SK-N-SH (cell line): ENCODE measurements at regions of chr12 and their contacts with region 1.

Region 1: GRCh38 chr12:6470375-6471163 is at the start of gene VAMP1:
- DNase-seq: peak; percentile 97
- H3K4me3 ChIP-seq: peak within 1 kb of the TSS; percentile 77 to 92
- H3K27ac ChIP-seq: peak within 1 kb of the TSS; percentile 91 to 98
- H3K4me1 ChIP-seq: peaks cover 0 to 13% of the 10 kb centered on the region in 2 experiments; a peak in 2 of 4 replicates
- H3K27me3 ChIP-seq: no peaks in the 10 kb centered on the region
- CTCF ChIP-seq: no peak
- EP300 ChIP-seq: no peak; a peak in 1 of 4 replicates
- RAD21 ChIP-seq: no peak
- polyA plus RNA-seq, gene VAMP1: 36.8 and 48.9 TPM in 2 replicates

Region 2: DNA sequence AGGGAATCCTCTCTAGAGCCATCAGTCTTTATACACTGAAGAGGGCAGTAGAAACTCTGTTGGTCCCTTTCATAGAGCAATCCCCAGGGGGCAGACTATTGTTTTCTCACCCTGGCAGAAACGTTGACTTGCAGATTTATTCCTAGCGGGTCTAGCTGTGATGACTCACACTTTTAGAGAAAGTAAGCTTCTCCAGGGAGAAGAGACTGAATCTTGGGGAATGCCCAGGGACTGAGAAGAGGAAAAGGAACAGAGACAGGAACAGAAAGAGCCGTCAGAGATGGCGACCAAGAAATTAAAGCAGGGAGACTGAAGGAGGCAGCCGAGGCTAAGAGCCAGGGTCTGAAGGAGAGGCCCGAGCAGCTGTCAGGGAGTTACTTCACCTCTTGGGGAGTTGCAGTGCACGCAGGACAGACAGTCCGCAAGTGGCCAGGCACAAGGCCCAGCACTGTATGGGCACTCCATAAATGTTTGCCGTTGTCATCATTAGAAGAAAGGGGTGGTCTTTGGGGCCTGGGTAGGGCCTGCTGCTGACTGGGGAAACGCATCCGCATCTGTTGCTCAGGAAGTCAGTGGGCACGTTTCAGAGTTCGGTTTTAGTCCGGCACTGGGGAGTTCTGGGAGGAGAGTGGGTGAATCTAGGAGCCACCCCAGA is 147.1 kb before region 1 on chr12:
- CTCF ChIA-PET with region 1: interaction called, 20 read pairs
- POLR2A ChIA-PET with region 1: no interaction called
- DNase-seq: peak; percentile 63
- H3K4me3 ChIP-seq: no peak overlapping the region
- H3K27ac ChIP-seq: peak overlapping the region; percentile 70 to 87
- H3K4me1 ChIP-seq: peaks cover 9 to 23% of the 10 kb centered on the region in 2 experiments; a peak in 3 of 4 replicates
- H3K27me3 ChIP-seq: no peaks in the 10 kb centered on the region
- CTCF ChIP-seq: peak; percentile 77
- EP300 ChIP-seq: peak in 1 of 2 experiments; percentile 46; a peak in 1 of 4 replicates
- RAD21 ChIP-seq: peak; percentile 32

Region 3: GRCh38 chr12:6399884-6400644 is 70.5 kb before region 1 on chr12:
- CTCF ChIA-PET with region 1: no interaction called
- POLR2A ChIA-PET with region 1: no interaction called
- DNase-seq: no peak
- H3K4me3 ChIP-seq: no peak overlapping the region
- H3K27ac ChIP-seq: no peak overlapping the region
- H3K4me1 ChIP-seq: no peaks in the 10 kb centered on the region
- H3K27me3 ChIP-seq: no peaks in the 10 kb centered on the region
- CTCF ChIP-seq: no peak
- EP300 ChIP-seq: no peak
- RAD21 ChIP-seq: no peak

Region 4: DNA sequence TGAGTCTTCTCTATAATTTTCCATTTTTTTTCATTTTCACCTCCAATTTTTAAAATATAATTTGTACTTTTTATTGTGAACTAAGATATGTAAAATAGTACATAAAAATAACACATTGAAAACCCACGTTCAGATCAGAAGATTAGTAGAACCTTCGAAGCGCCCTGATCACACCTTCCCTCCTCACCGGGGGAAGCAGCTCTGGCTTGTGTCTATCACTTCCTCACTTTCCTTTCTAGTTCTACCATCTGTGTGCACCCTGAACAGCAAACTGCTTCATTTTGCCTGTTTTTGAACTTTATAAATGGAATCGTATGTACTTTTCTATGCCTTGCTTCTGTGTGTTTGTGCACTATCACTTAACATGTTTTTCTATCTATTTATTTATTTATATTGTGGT is 37.6 kb before region 1 on chr12:
- CTCF ChIA-PET with region 1: interaction called, 91 read pairs
- POLR2A ChIA-PET with region 1: interaction called, 4 read pairs
- DNase-seq: no peak
- H3K4me3 ChIP-seq: no peak overlapping the region
- H3K27ac ChIP-seq: no peak overlapping the region
- H3K4me1 ChIP-seq: peaks cover 3 to 6% of the 10 kb centered on the region in 2 experiments; a peak in 2 of 4 replicates
- H3K27me3 ChIP-seq: no peaks in the 10 kb centered on the region
- CTCF ChIP-seq: no peak
- EP300 ChIP-seq: no peak
- RAD21 ChIP-seq: no peak

Region 5: GRCh38 chr12:6451348-6452244 is 19.0 kb before region 1 on chr12 and contains the start of gene TAPBPL:
- CTCF ChIA-PET with region 1: interaction called, 33 read pairs
- POLR2A ChIA-PET with region 1: interaction called, 19 read pairs
- DNase-seq: peak; percentile 88
- H3K4me3 ChIP-seq: peak within 1 kb of the TSS; percentile 63 to 69
- H3K27ac ChIP-seq: peak within 1 kb of the TSS; percentile 85 to 91
- H3K4me1 ChIP-seq: peaks cover 11 to 29% of the 10 kb centered on the region in 2 experiments; a peak in 2 of 4 replicates
- H3K27me3 ChIP-seq: no peaks in the 10 kb centered on the region
- CTCF ChIP-seq: no peak
- EP300 ChIP-seq: no peak
- RAD21 ChIP-seq: no peak
- polyA plus RNA-seq, gene TAPBPL: 24.1 and 26.0 TPM in 2 replicates

Region 6: DNA sequence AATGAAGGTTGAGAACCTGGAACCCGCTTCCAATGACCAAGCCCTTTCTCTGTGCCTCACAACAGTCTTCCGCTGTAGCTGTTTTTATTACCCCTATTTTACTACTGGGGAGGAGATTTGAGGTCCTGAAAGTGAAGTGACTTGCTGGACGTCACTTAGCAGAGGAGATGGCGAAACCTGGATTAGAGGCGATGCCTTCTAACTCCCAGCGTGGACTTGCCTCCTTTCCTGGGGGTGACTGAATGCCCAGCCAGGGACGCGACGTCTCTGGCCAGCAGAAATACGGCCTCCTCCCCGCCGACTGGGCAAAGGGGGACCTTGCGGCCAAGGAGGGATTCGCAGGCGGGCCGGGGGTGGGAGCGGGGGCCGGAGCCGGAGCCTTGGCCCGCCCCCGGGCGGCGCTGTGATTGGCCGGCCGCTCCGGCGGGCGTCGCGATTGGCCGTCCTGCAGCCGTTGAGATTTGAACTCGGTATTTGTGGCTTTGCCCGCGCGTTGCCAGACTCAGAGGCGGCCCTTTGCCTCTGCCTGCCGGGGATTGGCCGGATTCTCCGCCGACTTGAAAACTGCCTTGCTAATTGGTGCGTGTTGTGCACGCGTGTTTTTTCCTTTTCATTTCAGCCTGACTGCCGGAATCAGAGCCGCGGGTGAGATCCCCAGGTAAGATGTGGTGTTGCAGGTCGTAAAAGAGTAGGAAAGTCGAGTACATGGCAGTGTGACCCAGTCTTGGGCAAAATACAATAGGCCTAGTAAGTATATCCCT is 23.1 kb after region 1 on chr12 and contains the start of gene NCAPD2:
- CTCF ChIA-PET with region 1: interaction called, 15 read pairs
- POLR2A ChIA-PET with region 1: interaction called, 23 read pairs
- DNase-seq: peak; percentile 97
- H3K4me3 ChIP-seq: peak within 1 kb of the TSS; percentile 81 to 97
- H3K27ac ChIP-seq: peak within 1 kb of the TSS; percentile 97 to 99
- H3K4me1 ChIP-seq: peaks cover 13 to 18% of the 10 kb centered on the region in 2 experiments; a peak in 3 of 4 replicates
- H3K27me3 ChIP-seq: no peaks in the 10 kb centered on the region
- CTCF ChIP-seq: peak; percentile 37
- EP300 ChIP-seq: no peak
- RAD21 ChIP-seq: no peak
- polyA plus RNA-seq, gene NCAPD2: 39.8 and 46.9 TPM in 2 replicates

Region 7: GRCh38 chr12:6540181-6540877 is 69.8 kb after region 1 on chr12:
- CTCF ChIA-PET with region 1: interaction called, 15 read pairs
- POLR2A ChIA-PET with region 1: interaction called, 16 read pairs
- DNase-seq: peak; percentile 36
- H3K4me3 ChIP-seq: no peak overlapping the region
- H3K27ac ChIP-seq: no peak overlapping the region
- H3K4me1 ChIP-seq: peaks cover 5 to 20% of the 10 kb centered on the region in 2 experiments; a peak in 3 of 4 replicates
- H3K27me3 ChIP-seq: no peaks in the 10 kb centered on the region
- CTCF ChIP-seq: no peak
- EP300 ChIP-seq: no peak
- RAD21 ChIP-seq: no peak